ENCODE measurements at regions of chr2 and their contacts with region 1.

Region 1: GRCh38 chr2:38535744-38536506 is 66.8 kb downstream of the HNRNPLL start:
- DNase-seq: peak; percentile 84
- H3K4me3 ChIP-seq: peak overlapping the region; percentile 57
- H3K27ac ChIP-seq: no peak overlapping the region
- H3K4me1 ChIP-seq: peaks cover 9% of the 10 kb centered on the region
- H3K27me3 ChIP-seq: no peaks in the 10 kb centered on the region
- CTCF ChIP-seq: peak; percentile 93

Region 2: GRCh38 chr2:38076606-38077430 is 459.1 kb before region 1 on chr2:
- CTCF ChIA-PET with region 1: no interaction called
- POLR2A ChIA-PET with region 1: no interaction called
- intact Hi-C with region 1: no loop called
- DNase-seq: peak; percentile 81
- H3K4me3 ChIP-seq: peak overlapping the region; percentile 55
- H3K27ac ChIP-seq: peak overlapping the region; percentile 68
- H3K4me1 ChIP-seq: peaks cover 6% of the 10 kb centered on the region
- H3K27me3 ChIP-seq: no peaks in the 10 kb centered on the region
- CTCF ChIP-seq: peak; percentile 63

Region 3: GRCh38 chr2:38602732-38603401 is 66.9 kb after region 1 on chr2 and contains the start of gene HNRNPLL:
- CTCF ChIA-PET with region 1: no interaction called
- POLR2A ChIA-PET with region 1: no interaction called
- intact Hi-C with region 1: loop called (anchors 5 kb)
- DNase-seq: peak; percentile 99
- H3K4me3 ChIP-seq: peak within 1 kb of the TSS; percentile 93
- H3K27ac ChIP-seq: peak within 1 kb of the TSS; percentile 96
- H3K4me1 ChIP-seq: peaks cover 28% of the 10 kb centered on the region
- H3K27me3 ChIP-seq: no peaks in the 10 kb centered on the region
- CTCF ChIP-seq: no peak
- total RNA-seq, gene HNRNPLL: 73.8 and 82.0 TPM in 2 replicates

Region 4: GRCh38 chr2:38727661-38728060 is 191.7 kb after region 1 on chr2:
- CTCF ChIA-PET with region 1: interaction called, 4 read pairs
- POLR2A ChIA-PET with region 1: no interaction called
- intact Hi-C with region 1: loop called (anchors 2 kb)
- DNase-seq: no peak
- H3K4me3 ChIP-seq: no peak overlapping the region
- H3K27ac ChIP-seq: no peak overlapping the region
- H3K4me1 ChIP-seq: no peaks in the 10 kb centered on the region
- H3K27me3 ChIP-seq: no peaks in the 10 kb centered on the region
- CTCF ChIP-seq: no peak

Region 5: DNA sequence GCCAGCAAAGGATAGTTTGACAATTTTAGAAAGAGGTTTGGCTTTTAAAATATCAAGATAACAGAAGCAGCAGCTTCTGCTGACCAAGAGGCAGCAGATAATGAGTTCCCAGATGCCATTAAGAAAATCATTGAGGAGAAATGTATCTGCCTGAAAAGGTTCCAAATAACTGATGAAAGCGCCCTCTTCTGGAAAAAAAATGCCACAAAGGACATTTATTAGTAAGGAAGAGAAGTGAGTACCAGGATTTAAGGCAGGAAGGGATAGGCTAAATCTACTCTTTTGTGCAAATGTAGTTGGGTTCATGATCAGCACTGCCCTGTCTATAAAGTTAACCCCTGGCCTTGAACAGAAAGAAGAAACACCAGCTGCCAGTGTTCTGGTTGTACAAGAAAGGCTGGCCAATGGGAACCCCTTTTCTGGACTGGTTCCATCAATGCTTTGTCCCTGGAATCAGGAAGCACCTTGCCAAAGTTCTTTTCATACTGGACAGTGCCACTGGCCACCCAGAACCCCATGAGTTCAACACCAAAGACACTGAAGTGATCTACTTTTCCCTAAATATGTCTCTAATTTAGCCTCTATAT is 299.2 kb after region 1 on chr2:
- CTCF ChIA-PET with region 1: no interaction called
- POLR2A ChIA-PET with region 1: no interaction called
- intact Hi-C with region 1: loop called (anchors 2 kb)
- DNase-seq: peak; percentile 70
- H3K4me3 ChIP-seq: no peak overlapping the region
- H3K27ac ChIP-seq: no peak overlapping the region
- H3K4me1 ChIP-seq: no peaks in the 10 kb centered on the region
- H3K27me3 ChIP-seq: no peaks in the 10 kb centered on the region
- CTCF ChIP-seq: peak; percentile 71

Region 6: GRCh38 chr2:39547811-39548719 is 1012.1 kb after region 1 on chr2:
- CTCF ChIA-PET with region 1: no interaction called
- POLR2A ChIA-PET with region 1: no interaction called
- intact Hi-C with region 1: no loop called
- DNase-seq: no peak
- H3K4me3 ChIP-seq: no peak overlapping the region
- H3K27ac ChIP-seq: no peak overlapping the region
- H3K4me1 ChIP-seq: no peaks in the 10 kb centered on the region
- H3K27me3 ChIP-seq: no peaks in the 10 kb centered on the region
- CTCF ChIP-seq: no peak

Measured in A673 (cell line).